Activated naive CD4-positive, alpha-beta T cell treated with anti-CD3 and anti-CD28 coated beads for 36 hours (primary cell): ENCODE measurements at regions of chr9 and their contacts with region 1.

Region 1: GRCh38 chr9:19230356-19231125 is at the start of gene DENND4C:
- DNase-seq: peak; percentile 78
- H3K4me3 Mint-ChIP-seq: peak within 1 kb of the TSS; percentile 67
- H3K27ac Mint-ChIP-seq: no peak within 1 kb of the TSS
- H3K4me1 Mint-ChIP-seq: peaks cover 15% of the 10 kb centered on the region
- H3K27me3 Mint-ChIP-seq: no peaks in the 10 kb centered on the region
- total RNA-seq, gene DENND4C: 8.7 to 9.0 TPM

Region 2: GRCh38 chr9:19102631-19103345 is 127.8 kb before region 1 on chr9 and contains the start of gene HAUS6:
- CTCF ChIA-PET with region 1: no interaction called
- intact Hi-C with region 1: loop called (anchors 1 kb)
- DNase-seq: peak; percentile 97
- H3K4me3 Mint-ChIP-seq: peak within 1 kb of the TSS; percentile 94
- H3K27ac Mint-ChIP-seq: peak within 1 kb of the TSS; percentile 93
- H3K4me1 Mint-ChIP-seq: peaks cover 22% of the 10 kb centered on the region
- H3K27me3 Mint-ChIP-seq: no peaks in the 10 kb centered on the region
- total RNA-seq, gene HAUS6: 23.6 to 24.1 TPM

Region 3: GRCh38 chr9:19161257-19162025 is 69.1 kb before region 1 on chr9:
- CTCF ChIA-PET with region 1: no interaction called
- intact Hi-C with region 1: loop called (anchors 1 kb)
- DNase-seq: peak; percentile 87
- H3K4me3 Mint-ChIP-seq: no peak overlapping the region
- H3K27ac Mint-ChIP-seq: peak overlapping the region; percentile 81
- H3K4me1 Mint-ChIP-seq: peaks cover 23% of the 10 kb centered on the region
- H3K27me3 Mint-ChIP-seq: no peaks in the 10 kb centered on the region

Region 4: DNA sequence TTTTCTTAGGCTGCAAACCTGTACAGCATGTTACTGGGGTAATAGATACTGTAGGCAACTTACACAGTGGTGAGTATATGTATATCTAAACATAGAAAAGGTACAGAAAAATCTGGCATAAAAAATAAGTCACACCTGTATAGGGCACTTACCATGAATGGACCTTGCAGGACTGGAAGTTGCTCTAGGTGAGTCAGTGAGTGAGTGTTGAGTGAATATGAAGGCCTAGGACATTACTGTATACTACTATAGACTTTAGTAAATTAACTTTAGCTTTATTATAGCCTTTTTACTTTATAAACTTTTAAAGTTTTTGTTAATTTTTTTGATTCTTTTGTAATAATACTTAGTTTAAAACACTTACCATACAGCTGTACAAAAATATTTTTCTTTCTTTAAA is 51.3 kb after region 1 on chr9:
- CTCF ChIA-PET with region 1: interaction called, 4 read pairs
- intact Hi-C with region 1: loop called (anchors 5 kb)
- DNase-seq: no peak
- H3K4me3 Mint-ChIP-seq: no peak overlapping the region
- H3K27ac Mint-ChIP-seq: no peak overlapping the region
- H3K4me1 Mint-ChIP-seq: peaks cover 17% of the 10 kb centered on the region
- H3K27me3 Mint-ChIP-seq: no peaks in the 10 kb centered on the region

Region 5: GRCh38 chr9:19408693-19409400 is 178.3 kb after region 1 on chr9 and contains the start of gene ACER2:
- CTCF ChIA-PET with region 1: no interaction called
- intact Hi-C with region 1: loop called (anchors 1 kb)
- DNase-seq: peak; percentile 94
- H3K4me3 Mint-ChIP-seq: peak within 1 kb of the TSS; percentile 87
- H3K27ac Mint-ChIP-seq: no peak within 1 kb of the TSS
- H3K4me1 Mint-ChIP-seq: peaks cover 14% of the 10 kb centered on the region
- H3K27me3 Mint-ChIP-seq: no peaks in the 10 kb centered on the region
- total RNA-seq, gene ACER2: 2.0 to 2.2 TPM

Region 6: GRCh38 chr9:19682397-19682796 is 451.9 kb after region 1 on chr9:
- CTCF ChIA-PET with region 1: no interaction called
- intact Hi-C with region 1: no loop called
- DNase-seq: no peak
- H3K4me3 Mint-ChIP-seq: no peak overlapping the region
- H3K27ac Mint-ChIP-seq: no peak overlapping the region
- H3K4me1 Mint-ChIP-seq: no peaks in the 10 kb centered on the region
- H3K27me3 Mint-ChIP-seq: peaks cover 16% of the 10 kb centered on the region